Common myeloid progenitor, CD34-positive (primary cell): ENCODE measurements at regions of chr4 and their contacts with region 1.

Region 1: DNA sequence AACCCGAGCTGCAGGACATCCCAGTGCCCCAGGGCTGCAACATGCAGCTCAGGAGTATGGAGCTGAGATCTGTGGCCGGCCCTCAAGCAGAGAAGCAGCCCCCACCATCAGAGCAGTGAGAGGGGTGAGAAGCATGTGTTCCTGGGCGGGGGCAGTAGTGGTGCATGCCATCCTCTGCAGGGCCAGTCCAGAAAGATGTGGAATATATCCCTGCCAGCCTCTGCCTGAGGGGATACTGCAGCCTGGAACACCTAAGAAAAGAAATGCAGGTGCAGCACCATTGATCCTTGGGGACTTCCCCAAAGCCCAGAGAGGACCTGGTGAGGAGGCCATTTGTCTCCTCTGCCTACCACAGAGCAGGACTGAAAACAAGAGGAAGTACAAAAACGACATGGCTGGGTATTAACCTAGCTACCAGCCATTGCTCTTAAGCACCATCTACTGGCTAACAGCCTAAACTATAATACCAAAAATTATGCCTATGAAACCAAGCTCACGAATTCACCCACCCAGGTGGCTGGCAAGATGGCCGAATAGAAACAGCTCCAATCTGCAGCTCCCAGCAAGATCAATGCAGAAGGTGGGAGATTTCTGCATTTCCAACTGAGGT is 158.8 kb downstream of the ADGRA3 start:
- DNase-seq: peak; percentile 36 to 75 (median 71)
- H3K4me3 ChIP-seq: no peak overlapping the region
- H3K27ac ChIP-seq: no peak overlapping the region
- H3K4me1 ChIP-seq: no peaks in the 10 kb centered on the region
- H3K27me3 ChIP-seq: no peaks in the 10 kb centered on the region

Region 2: DNA sequence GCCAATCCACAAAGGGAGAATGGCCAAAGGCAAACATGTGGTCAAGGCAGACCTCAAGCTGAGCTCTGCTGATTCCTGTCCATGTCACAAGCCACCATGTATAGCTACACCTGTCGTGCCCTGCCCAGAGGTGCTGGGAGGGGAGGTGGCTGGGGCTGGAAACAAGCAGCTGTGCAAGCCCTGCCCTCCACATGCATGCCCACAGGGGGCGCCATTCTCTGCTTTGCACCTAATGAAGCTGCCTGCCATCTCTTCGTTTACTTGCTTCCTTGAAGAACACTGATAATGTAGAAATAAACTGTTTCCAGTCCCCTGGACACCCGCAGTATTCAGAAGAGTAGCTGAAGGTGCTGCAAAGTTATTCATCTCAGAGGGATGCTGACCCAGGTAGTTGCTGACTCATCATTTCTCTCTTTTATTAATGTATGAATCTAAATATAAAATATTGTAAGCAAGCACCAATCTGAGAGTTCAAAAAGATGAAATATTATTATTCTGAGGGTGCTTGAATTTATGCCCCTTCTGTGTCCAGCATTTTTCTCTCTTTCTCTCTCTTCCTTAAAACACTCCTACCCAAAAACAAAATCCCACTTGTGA is 119.8 kb before region 1 on chr4:
- CTCF ChIA-PET with region 1: interaction called, 11 read pairs
- POLR2A ChIA-PET with region 1: no interaction called
- DNase-seq: peak; percentile 68 to 78 (median 75)
- H3K4me3 ChIP-seq: peak overlapping the region in 5 of 7 experiments; percentile 54 to 73 (median 61)
- H3K27ac ChIP-seq: no peak overlapping the region
- H3K4me1 ChIP-seq: peaks cover 0 to 3% (median 0%) of the 10 kb centered on the region in 4 experiments
- H3K27me3 ChIP-seq: no peaks in the 10 kb centered on the region

Region 3: DNA sequence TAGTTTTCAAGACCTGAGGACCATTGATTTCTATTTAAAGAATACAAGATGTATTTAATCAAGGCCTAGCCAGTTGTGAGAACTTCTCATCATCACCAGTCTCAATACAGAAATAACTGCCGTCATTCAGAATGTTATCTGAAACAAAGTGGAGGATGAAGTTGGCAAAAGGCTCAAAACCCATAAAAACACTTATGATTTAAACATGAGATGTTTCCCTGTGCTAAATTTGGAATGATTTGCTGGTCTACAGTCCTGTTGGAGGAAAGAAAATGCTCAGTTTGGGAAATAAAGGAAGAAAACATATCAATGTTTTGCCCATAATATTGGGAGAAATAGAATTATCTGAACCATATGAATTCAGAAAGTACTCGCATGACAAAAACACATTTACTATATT is 33.4 kb before region 1 on chr4:
- CTCF ChIA-PET with region 1: no interaction called
- POLR2A ChIA-PET with region 1: no interaction called
- DNase-seq: no peak
- H3K4me3 ChIP-seq: no peak overlapping the region
- H3K27ac ChIP-seq: no peak overlapping the region
- H3K4me1 ChIP-seq: no peaks in the 10 kb centered on the region
- H3K27me3 ChIP-seq: no peaks in the 10 kb centered on the region